Activated T-helper 1 cell treated with anti-CD3 and anti-CD28 coated beads, Interleukin-12 subunit alpha, Interleukin-12 subunit beta, Interleukin-2, Interleukin-4 antibody, amounts not matched to agents 30 ng/mL and 10 ng/mL and 1 ng/mL, durations not matched to agents 14 hours and 24 hours and 36 hours (primary cell): ENCODE measurements at regions of chr3 and their contacts with region 1.

Region 1: DNA sequence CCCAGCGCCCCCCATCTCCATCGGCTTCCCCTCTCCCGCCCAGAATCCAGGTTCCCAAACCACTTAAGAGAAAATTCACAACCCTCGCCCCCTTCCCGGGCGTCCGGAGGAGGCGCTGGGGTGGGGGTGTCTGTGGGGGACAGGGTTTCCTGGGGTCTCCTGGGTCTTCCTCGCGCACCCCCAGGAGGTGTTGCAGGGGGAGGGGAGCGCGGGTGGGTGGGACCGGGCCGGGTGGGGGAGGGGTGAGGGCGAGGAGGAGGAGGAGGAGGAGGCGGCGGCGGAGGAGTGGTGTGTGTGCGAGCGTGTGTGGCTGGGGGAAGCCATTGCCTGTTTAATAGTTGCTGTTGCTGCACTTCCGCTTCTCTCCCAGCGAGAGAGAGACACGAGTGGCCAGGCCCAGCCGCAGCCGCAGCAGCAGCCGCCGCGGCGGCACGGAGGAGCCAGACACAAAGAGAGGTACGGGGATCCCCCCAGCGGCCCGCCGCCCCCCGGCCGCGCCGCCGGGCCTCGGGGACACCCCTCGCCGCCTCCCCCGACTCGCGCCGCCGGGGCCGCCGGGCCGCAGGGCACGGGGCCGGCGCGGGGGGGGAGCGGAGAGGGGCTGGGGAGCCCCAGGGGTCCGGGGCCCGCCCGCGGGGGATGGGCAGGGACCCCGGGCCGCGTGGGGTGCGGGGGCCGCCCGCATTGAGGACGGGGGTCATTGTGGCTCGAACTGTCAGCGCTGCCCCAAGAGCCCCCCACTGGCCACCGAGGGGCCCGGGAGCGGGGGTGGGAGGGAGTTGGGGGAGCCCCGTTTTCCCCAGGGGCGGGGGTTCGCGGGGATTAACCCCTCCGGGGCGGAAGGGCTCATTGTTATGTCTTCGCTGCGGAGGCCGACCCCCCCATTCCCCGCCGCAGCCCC is at the start of gene UBE2E1:
- DNase-seq: peak; percentile 53
- H3K4me3 Mint-ChIP-seq: peak within 1 kb of the TSS; percentile 95
- H3K27ac Mint-ChIP-seq: peak within 1 kb of the TSS; percentile 96
- H3K4me1 Mint-ChIP-seq: peaks cover 49% of the 10 kb centered on the region
- H3K27me3 Mint-ChIP-seq: peaks cover 33% of the 10 kb centered on the region
- total RNA-seq, gene UBE2E1: 78.8 and 87.0 TPM in 2 replicates

Region 2: DNA sequence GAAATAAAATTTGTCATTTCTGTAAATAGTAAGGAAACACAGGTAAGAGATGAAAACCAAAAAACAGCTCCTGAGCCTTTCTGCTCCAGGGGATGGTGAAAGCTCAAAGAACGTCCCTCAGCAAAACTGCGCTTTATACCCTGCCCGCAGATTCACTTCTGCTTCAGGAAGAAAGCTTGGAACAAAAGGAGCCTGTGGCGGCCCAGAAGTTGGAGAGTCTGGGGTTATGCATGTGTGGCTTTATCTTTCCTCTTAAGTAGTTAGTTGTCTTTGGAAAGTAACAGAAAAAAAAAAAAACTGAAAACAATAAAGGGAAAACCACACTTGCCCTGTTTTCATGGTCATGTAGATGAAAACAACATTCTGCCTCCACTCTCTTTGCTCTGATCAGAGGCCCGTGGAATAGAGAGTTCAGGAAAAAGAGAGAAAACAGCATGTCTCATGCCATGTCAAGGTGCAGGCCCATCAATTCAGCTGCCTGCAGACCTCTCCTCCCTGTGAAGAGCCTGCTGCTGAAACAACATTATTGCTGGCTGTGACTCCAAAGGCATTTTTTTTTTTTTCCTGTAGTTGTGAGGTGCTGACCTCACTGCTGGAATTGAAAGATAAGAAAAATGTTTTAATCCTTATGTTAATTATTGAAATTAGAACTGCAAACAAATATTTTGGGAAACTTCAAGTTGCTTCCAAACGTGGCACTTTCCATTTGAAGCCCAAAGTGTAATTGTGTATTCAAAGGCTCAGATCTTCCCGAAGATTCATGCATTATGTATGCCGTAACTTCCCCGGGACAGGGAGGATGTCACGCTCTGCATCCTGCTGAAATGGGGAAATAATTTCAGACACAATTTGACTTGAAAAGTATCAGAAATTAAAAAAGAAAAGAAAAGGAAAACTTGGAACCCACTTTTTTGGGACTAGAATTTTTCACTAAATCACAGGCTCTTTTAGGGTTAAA is 1946.5 kb before region 1 on chr3:
- intact Hi-C with region 1: no loop called
- DNase-seq: no peak
- H3K4me3 Mint-ChIP-seq: no peak overlapping the region
- H3K27ac Mint-ChIP-seq: no peak overlapping the region
- H3K4me1 Mint-ChIP-seq: no peaks in the 10 kb centered on the region
- H3K27me3 Mint-ChIP-seq: no peaks in the 10 kb centered on the region

Region 3: GRCh38 chr3:22565393-22565792 is 1240.5 kb before region 1 on chr3:
- intact Hi-C with region 1: loop called (anchors 10 kb)
- DNase-seq: no peak
- H3K4me3 Mint-ChIP-seq: no peak overlapping the region
- H3K27ac Mint-ChIP-seq: no peak overlapping the region
- H3K4me1 Mint-ChIP-seq: no peaks in the 10 kb centered on the region
- H3K27me3 Mint-ChIP-seq: no peaks in the 10 kb centered on the region

Region 4: GRCh38 chr3:23442598-23443383 is 363.1 kb before region 1 on chr3:
- intact Hi-C with region 1: loop called (anchors 10 kb)
- DNase-seq: no peak
- H3K4me3 Mint-ChIP-seq: no peak overlapping the region
- H3K27ac Mint-ChIP-seq: no peak overlapping the region
- H3K4me1 Mint-ChIP-seq: peaks cover 32% of the 10 kb centered on the region
- H3K27me3 Mint-ChIP-seq: peaks cover 13% of the 10 kb centered on the region